Activated naive CD8-positive, alpha-beta T cell treated with anti-CD3 and anti-CD28 coated beads, Interleukin-2, amount 10 ng/mL, durations not matched to agents 7 days and 5 days (primary cell): ENCODE measurements at regions of chr9 and their contacts with region 1.

Region 1: DNA sequence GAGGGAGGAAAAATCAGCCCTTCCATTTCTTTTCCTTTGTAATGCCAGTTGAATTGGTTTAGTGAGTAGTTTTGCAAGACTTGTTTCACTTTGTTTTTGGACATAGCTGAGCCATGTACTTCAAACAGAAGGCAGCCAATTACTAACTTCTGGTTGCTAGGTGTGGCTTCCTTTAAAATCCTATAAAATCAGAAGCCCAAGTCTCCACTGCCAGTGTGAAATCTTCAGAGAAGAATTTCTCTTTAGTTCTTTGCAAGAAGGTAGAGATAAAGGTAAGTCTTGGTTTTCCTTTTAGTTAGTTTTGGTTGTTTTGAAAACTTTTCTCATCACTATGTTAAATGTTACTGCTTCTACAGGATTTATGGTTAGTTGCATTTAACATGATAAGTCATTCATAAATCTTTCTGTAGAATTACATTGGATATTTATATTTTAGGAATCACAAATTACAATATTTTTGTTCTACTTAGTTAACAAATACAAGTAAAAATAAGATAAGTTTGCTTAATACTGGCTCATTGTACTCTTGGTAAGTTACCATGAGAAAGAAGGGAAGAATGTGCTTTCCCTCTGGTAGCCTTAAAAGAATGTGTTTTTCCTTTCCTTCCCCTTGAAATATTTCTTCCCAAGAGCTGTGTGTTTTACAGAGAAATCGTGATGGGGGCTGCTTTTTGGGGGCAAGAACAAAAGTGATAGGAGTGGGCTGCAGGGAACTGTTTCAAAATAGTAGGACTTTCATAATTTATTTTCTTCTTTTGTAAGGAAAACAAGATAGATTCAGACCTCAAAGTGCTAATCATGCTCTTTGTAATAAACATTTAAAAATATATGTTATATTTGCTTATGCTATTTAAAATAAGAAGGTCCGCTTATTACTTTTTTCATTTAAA is at the start of gene ANXA1:
- DNase-seq: no peak
- ATAC-seq: peak; percentile 34
- H3K4me3 Mint-ChIP-seq: peak within 1 kb of the TSS; percentile 90
- H3K27ac Mint-ChIP-seq: peak within 1 kb of the TSS; percentile 89
- H3K4me1 Mint-ChIP-seq: peaks cover 59% of the 10 kb centered on the region
- H3K27me3 Mint-ChIP-seq: no peaks in the 10 kb centered on the region
- total RNA-seq, gene ANXA1: 171 to 187 TPM

Region 2: DNA sequence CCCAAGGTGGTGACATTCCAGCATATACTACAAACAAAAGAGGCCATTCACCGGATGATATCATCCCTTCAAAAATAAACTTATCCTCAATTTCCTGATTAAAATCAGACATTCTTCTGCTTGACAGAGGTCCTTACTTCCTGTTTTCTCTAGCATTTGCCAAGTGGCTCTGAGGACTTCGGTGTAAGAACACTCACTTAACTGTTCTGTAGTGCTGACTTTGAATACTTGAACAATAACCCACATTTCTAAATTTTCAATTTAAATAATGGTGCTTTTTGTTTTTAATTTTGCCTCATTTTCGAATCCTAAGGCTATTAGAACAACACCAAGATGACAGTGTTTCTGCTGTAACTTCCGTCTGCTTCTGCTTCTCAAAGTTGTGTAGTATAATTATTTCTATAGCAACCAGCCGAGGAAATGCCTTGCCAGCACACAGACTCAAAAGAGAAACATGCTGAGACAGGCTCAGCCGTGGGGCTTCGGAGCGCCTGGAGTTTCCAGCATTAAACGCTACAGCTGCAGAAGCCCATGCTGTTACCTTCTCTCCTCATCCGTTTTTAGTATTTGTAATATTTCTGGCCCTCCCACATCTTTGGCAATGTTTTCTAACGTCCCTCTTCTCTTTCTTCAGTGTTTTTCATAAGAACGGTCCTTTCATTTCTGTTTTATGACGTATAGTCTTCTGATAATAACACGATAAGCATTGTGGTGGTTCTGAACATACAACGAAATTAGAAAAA is 19.7 kb before region 1 on chr9:
- POLR2A ChIA-PET with region 1: interaction called, 21 read pairs
- DNase-seq: peak; percentile 65
- ATAC-seq: peak; percentile 95
- H3K4me3 Mint-ChIP-seq: peak overlapping the region; percentile 90
- H3K27ac Mint-ChIP-seq: peak overlapping the region; percentile 97
- H3K4me1 Mint-ChIP-seq: peaks cover 23% of the 10 kb centered on the region
- H3K27me3 Mint-ChIP-seq: no peaks in the 10 kb centered on the region

Region 3: GRCh38 chr9:73179589-73179988 is 27.7 kb after region 1 on chr9:
- POLR2A ChIA-PET with region 1: no interaction called
- DNase-seq: no peak
- ATAC-seq: no peak
- H3K4me3 Mint-ChIP-seq: no peak overlapping the region
- H3K27ac Mint-ChIP-seq: no peak overlapping the region
- H3K4me1 Mint-ChIP-seq: peaks cover 6% of the 10 kb centered on the region
- H3K27me3 Mint-ChIP-seq: no peaks in the 10 kb centered on the region